GM13977 (cell line): ENCODE measurements at regions of chr6 and their contacts with region 1.

Region 1: DNA sequence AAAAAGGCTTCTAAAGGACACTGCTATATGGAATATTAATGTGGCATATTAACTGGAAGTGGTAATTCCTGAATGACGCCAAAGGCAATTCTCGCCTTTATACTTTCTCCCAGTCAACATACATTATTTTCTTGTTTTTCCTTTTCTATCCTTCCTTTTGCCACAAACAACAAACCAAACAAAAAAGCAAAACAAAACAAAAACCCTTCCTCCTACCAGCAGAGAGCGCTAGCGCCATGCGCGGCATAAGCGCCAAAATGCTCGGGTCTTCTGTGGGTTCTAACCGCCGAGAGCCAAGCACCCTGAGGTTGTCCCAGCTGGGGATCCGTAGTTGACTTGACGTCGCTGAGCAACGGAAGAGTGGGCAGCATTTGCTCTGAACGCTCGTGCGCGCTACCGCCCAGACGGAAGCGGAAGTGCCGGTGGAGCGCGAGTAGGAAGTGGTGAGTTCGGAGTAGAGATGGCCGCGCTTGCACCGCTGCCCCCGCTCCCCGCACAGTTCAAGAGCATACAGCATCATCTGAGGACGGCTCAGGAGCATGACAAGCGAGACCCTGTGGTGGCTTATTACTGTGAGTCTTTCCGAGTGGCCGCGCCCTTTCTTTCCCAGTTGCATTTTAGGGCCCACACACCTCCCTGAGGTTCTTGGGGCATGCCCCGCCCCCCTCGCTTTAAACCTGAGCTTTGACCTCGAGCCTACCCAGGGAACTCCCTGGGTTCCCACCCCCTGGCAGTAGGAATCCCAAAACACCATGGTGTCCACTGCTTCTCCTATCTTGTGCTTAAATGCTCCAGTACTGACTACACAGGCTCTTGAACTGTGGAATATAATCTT is at the starts of genes NMBR and VTA1:
- DNase-seq: peak; percentile 80
- CTCF ChIP-seq: peak; percentile 85

Region 2: GRCh38 chr6:142387997-142388815 is 241.2 kb after region 1 on chr6:
- in situ Hi-C with region 1: loop called (anchors 25 kb)
- DNase-seq: peak; percentile 16
- CTCF ChIP-seq: peak; percentile 41